ENCODE measurements at regions of chr13 and their contacts with region 1.

Region 1: GRCh38 chr13:30802953-30803478 is 67.7 kb downstream of the ALOX5AP start:
- DNase-seq: peak; percentile 92 to 96
- ATAC-seq: peak; percentile 95
- H3K4me3 ChIP-seq: no peak overlapping the region
- H3K27ac ChIP-seq: no peak overlapping the region
- H3K4me1 ChIP-seq: no peaks in the 10 kb centered on the region
- H3K27me3 ChIP-seq: no peaks in the 10 kb centered on the region

Region 2: GRCh38 chr13:30132623-30133553 is 670.1 kb before region 1 on chr13:
- intact Hi-C with region 1: loop called (anchors 5 to 10 kb)
- DNase-seq: peak; percentile 98 to 100
- ATAC-seq: peak; percentile 94
- H3K4me3 ChIP-seq: no peak overlapping the region
- H3K27ac ChIP-seq: no peak overlapping the region
- H3K4me1 ChIP-seq: no peaks in the 10 kb centered on the region
- H3K27me3 ChIP-seq: no peaks in the 10 kb centered on the region

Region 3: GRCh38 chr13:30600496-30600895 is 202.5 kb before region 1 on chr13:
- intact Hi-C with region 1: no loop called
- DNase-seq: no peak
- ATAC-seq: no peak
- H3K4me3 ChIP-seq: no peak overlapping the region
- H3K27ac ChIP-seq: no peak overlapping the region
- H3K4me1 ChIP-seq: no peaks in the 10 kb centered on the region
- H3K27me3 ChIP-seq: no peaks in the 10 kb centered on the region

Region 4: GRCh38 chr13:30617315-30618185 is 185.5 kb before region 1 on chr13 and contains the start of gene USPL1:
- intact Hi-C with region 1: loop called in 1 of 2 experiments (anchors 5 kb)
- DNase-seq: peak; percentile 99
- ATAC-seq: peak; percentile 98
- H3K4me3 ChIP-seq: peak within 1 kb of the TSS; percentile 65 to 86
- H3K27ac ChIP-seq: peak within 1 kb of the TSS; percentile 74 to 99
- H3K4me1 ChIP-seq: peaks cover 0 to 4% of the 10 kb centered on the region in 2 donors
- H3K27me3 ChIP-seq: no peaks in the 10 kb centered on the region
- total RNA-seq, gene USPL1: 15.6 to 18.8 TPM

Region 5: DNA sequence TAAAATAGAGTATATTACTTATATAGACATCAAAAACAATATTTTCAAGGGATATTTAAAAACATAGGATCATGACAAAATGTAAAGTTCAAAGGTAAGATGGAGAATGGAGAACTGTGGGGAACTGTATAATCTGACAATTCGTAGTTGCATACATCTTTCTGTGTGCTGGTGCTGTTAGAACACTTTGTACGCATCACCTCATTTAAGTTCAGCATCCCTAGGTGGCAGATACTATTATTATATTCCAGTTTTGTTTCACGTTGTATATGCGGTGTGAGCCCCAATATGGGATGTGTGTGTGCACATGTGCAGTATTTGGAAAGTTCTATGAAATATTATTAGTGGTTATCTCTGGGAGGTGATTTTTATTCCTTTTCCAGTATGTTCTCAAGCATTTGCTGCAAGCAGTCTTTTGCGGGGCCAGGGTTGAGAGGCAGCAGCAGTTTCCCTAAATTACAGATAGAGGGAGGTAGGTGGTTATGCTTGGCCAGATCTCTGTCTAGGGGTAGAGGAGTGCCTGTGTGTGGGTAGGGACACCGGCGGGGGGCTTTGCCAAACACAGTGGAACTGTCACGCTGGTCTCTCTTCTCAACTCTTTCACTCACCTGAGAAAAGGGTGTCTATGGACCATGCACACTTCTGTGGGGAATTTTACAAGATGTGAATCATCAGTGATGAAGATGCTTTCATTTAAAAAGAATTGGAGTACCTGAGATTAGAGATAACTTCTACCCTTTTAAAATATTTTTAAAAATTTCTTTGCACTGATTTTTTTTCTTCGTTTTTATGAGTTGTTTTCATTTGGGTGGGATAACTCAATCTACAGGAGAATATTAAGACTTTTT is 123.3 kb before region 1 on chr13:
- intact Hi-C with region 1: loop called (anchors 5 kb)
- DNase-seq: no peak
- ATAC-seq: peak; percentile 61
- H3K4me3 ChIP-seq: no peak overlapping the region
- H3K27ac ChIP-seq: no peak overlapping the region
- H3K4me1 ChIP-seq: no peaks in the 10 kb centered on the region
- H3K27me3 ChIP-seq: no peaks in the 10 kb centered on the region

Region 6: DNA sequence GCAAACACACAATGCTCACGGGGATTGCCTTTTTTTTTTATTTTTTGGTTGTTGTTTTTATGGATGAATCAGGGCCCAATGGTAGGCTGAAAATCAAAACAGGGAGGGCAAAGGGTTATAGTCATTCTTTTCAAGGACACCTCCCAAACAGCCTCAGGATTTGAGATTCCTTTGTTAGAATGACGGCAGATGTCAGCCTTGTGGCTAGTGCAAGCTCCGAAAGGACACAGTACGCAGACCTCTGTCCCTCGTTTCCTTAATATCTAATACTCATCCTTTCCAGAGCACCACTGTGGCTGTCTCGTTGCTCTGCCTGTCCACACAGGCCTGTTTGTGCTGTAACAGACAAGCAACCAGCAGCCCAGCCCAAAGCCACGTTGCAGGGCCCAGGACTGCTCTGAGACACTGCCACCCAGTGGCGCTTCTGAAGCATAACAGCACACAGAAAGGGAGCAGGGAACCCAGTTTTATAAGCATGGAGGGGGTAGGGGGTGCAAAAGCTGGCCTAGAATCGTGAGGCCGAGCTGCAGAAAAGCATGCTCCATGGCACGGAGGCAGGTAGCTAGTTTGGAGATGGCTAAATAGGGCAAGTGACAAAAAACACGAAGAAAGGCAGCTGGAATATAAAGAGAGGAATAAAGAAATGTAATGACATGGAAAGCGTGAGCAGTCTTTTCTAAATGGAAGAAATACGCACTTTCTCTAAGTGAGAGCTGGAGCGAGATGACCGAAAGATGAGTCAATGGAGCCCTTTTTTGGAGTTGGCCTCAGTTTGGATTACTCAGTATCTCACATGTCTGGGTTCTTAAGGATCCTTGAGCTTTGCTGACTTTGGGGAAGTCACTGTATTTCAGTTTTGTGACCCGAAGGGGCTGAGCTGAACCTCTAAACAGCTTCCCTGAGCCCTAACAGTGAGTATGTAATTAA is 62.4 kb after region 1 on chr13:
- intact Hi-C with region 1: loop called (anchors 5 kb)
- DNase-seq: peak; percentile 87 to 89
- ATAC-seq: peak; percentile 93
- H3K4me3 ChIP-seq: no peak overlapping the region
- H3K27ac ChIP-seq: peak overlapping the region; percentile 56 to 81
- H3K4me1 ChIP-seq: peaks cover 2 to 3% of the 10 kb centered on the region in 2 donors
- H3K27me3 ChIP-seq: no peaks in the 10 kb centered on the region

Region 7: DNA sequence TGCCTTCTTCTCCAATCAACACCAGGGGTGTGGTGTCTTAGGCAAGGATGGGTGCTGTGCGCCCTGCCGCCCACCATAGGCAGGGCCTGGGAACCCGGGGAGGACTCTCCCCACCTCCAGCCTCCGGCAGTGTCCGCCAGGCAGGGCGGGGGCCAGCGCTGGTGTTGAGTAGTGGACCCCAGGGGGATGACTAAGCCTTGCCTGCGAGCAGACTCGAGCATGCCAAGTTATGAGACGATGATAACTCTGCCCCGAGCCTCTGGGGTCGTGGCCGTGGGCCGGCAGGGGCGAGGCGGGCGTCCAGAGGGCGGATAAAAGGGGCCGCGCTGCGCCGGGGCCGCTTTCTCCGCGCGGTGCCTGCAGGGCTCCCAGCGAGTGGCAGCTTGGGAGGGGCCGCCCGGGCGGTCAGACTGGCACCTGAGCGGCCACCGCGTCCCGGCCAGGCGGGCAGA is 102.9 kb after region 1 on chr13 and contains the start of gene MEDAG:
- intact Hi-C with region 1: loop called in 1 of 2 experiments (anchors 5 kb)
- DNase-seq: peak; percentile 92 to 96
- ATAC-seq: peak; percentile 92
- H3K4me3 ChIP-seq: peak within 1 kb of the TSS; percentile 37 to 49
- H3K27ac ChIP-seq: peak within 1 kb of the TSS; percentile 79 to 90
- H3K4me1 ChIP-seq: peaks cover 0 to 8% of the 10 kb centered on the region in 2 donors
- H3K27me3 ChIP-seq: no peaks in the 10 kb centered on the region
- total RNA-seq, gene MEDAG: 146 to 188 TPM